B cell (primary cell): ENCODE measurements at regions of chr6 and their contacts with region 1.

Region 1: DNA sequence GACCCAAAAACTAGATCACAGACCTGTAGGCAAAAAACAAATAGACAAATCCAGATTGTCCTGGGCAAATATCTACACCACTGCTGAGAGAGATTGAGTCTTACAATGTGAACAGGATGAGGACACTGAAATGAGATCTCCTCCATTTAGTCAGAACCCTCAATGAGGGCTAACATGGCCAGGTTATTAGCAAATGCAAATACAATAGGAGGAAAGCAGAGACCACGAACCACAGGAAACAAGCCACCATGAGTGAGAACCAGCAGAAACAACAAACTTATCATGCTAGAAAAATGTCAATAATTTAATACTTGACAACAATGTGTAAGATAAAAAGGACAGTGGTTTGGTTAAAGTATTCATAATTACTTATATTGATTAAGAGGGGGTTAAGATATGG is 162.8 kb downstream of the SYNE1 start:
- DNase-seq: no peak
- ATAC-seq: no peak
- H3K4me3 ChIP-seq: no peak overlapping the region
- H3K4me3 Mint-ChIP-seq: no peak overlapping the region
- H3K27ac ChIP-seq: no peak overlapping the region
- H3K27ac Mint-ChIP-seq: no peak overlapping the region
- H3K4me1 ChIP-seq: no peaks in the 10 kb centered on the region
- H3K4me1 Mint-ChIP-seq: no peaks in the 10 kb centered on the region
- H3K27me3 ChIP-seq: no peaks in the 10 kb centered on the region
- H3K27me3 Mint-ChIP-seq: peaks cover 3% of the 10 kb centered on the region
- CTCF ChIP-seq: no peak

Region 2: DNA sequence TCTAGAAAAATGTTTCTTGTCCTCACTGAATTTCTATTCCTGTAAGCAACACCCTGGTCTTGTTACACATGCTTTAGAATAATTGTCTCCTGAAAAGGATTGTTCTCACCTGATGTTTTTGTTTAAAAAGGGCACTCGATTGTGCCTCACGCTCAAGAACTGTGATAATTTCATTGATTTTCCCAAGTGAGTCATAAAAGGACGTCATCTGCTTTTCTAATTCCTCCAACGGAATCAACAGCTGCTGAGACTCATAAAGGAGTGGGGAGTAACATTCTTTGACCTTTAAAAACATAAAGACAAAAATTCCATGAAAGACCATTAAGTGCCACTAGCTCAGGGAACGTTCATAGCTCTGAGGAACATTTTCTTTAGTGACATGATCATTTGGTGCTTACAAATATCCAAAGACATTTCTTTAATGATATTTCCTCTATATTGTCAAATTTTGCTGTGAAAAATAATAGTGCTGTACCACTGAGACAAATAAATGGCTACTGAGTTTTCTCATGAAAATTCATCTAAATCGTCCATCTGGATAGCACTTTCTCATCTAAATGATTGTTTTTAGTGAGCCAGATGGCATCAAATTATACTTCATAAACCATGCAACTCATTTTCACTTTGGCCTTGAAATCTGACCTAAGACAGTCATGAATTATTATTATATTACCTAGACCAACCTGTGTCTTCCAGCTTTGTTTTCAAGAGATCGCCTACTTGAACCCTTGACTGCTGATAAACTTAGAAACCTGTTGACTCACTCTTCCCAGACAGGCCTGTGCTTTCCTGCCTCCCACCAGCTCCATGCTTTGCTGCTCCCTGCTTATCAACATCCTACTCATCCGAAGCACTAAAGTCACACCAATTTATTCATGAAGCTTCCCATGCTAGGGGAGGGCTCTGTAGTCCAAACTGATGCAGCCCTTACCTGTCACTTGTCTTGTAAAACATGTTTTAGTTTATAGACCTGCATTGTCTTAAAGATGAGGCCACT is 15.4 kb before region 1 on chr6:
- CTCF ChIA-PET with region 1: interaction called, 11 read pairs
- POLR2A ChIA-PET with region 1: no interaction called
- intact Hi-C with region 1: no loop called
- DNase-seq: no peak
- ATAC-seq: no peak
- H3K4me3 ChIP-seq: no peak overlapping the region
- H3K4me3 Mint-ChIP-seq: no peak overlapping the region
- H3K27ac ChIP-seq: no peak overlapping the region
- H3K27ac Mint-ChIP-seq: no peak overlapping the region
- H3K4me1 ChIP-seq: no peaks in the 10 kb centered on the region
- H3K4me1 Mint-ChIP-seq: peaks cover 4% of the 10 kb centered on the region
- H3K27me3 ChIP-seq: no peaks in the 10 kb centered on the region
- H3K27me3 Mint-ChIP-seq: peaks cover 4% of the 10 kb centered on the region
- CTCF ChIP-seq: no peak